Right ventricle myocardium superior (tissue), 1 donor: ENCODE measurements at regions of chr3 and their contacts with region 1.

Region 1: DNA sequence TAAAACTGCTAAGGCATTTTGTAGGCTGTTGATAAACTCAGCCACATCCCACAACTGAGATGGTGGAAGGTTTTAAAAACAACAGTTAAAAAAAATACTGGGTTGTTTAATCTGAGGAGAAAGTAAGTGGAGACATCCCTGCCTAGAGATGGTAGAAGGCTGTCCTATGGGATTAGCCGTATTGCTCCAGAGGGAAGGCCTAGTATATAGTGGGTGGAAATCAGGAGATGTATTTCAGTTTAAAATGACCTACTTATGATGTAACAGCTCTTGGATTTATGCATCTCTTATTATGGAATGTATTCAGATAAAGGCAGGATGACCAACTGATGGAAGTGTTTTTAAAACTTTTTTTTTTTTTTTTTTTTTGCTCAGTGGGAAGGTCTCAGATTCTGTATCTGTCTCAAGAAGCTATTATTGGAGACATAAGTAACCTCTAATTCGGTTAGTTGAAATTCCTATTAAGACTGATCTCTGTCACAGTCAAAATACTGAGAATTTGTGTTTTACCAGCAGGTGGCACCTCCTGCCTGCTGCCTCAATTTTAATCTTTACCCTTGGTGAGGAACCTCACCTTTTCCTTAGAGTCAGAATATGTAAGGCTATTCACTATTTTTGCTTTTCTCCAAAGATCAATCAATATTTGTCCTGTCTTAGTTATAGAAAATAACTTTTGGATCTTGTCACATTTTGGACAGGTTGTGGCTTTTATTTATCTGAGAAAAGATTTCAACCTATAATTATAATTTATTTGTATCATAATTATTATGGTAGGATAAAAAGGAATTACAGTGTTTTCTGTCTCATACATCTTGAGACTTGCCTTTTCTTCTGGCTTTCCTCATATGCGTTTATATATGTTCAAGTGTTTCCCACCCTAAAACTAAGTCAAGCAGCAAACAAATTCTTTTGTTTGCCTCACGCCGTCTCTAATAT is 63.0 kb downstream of the VPS8 start:
- DNase-seq: no peak
- ATAC-seq: no peak

Region 2: GRCh38 chr3:184058029-184058428 is 816.9 kb before region 1 on chr3:
- intact Hi-C with region 1: no loop called
- DNase-seq: no peak
- ATAC-seq: no peak

Region 3: GRCh38 chr3:184145111-184145524 is 729.9 kb before region 1 on chr3:
- intact Hi-C with region 1: no loop called
- DNase-seq: peak; percentile 77
- ATAC-seq: peak; percentile 74

Region 4: GRCh38 chr3:184405075-184406030 is 469.6 kb before region 1 on chr3:
- intact Hi-C with region 1: no loop called
- DNase-seq: peak; percentile 8
- ATAC-seq: no peak

Region 5: DNA sequence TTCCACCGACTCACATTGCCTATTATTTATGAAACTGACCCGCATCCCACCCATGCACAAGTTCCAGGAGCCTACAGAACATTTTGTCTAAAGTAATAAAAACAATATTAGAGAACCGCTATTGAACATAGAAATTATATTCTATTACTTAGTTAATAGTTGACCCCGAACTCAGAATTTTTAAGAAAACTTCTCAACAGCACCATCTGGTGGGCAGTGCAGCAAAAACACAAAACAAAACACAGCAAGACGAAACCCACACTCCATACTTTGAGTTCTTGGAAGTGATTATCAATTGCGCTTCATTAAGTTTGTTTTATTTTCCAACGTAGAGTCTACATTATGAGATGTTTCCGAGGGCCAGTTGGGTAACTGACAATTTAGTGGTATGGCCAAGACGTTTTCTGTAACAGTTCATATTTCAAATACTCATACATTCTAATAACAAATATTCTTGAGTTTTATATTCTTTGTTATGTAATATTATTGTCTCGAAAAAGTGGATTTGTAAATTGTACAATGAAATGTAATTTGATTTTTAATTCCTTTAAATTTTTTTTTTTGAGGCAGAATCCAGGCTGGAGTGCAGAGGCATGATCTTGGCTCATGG is 301.9 kb after region 1 on chr3:
- intact Hi-C with region 1: loop called (anchors 2 kb)
- DNase-seq: no peak
- ATAC-seq: peak; percentile 51